Gastrocnemius medialis (tissue), 4 donors: ENCODE measurements at regions of chr11 and their contacts with region 1.

Region 1: GRCh38 chr11:31641477-31642062 is 132.0 kb downstream of the ELP4 start:
- DNase-seq: no peak
- ATAC-seq: no peak
- H3K4me3 ChIP-seq: no peak overlapping the region
- H3K27ac ChIP-seq: no peak overlapping the region
- H3K4me1 ChIP-seq: peaks cover 13 to 25% of the 10 kb centered on the region in 2 donors
- H3K27me3 ChIP-seq: no peaks in the 10 kb centered on the region
- CTCF ChIP-seq: peak in 3 of 5 experiments; percentile 21 to 54 (median 45)
- POLR2A ChIP-seq: no peak

Region 2: DNA sequence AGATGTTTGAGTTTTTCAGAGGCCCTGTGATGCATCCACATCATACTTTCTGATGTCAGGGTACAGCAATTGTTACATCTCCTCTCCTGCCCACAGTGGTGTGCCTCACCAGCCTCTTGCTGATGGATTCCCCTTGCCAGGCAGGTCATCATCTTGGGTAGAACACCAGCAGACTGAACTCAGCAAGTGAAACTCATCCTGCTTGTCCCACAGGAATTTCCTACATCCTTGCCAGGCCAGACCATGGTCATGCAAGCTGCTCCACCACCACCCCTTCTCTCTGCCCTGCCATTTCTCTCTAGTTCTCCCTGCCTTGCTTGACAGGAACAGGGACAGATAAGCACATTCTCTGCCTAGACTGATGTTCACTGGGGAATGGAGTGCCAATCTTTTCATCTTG is 83.6 kb after region 1 on chr11:
- in situ Hi-C with region 1: loop called in 1 of 4 experiments (anchors 25 kb)
- intact Hi-C with region 1: no loop called
- DNase-seq: no peak
- ATAC-seq: no peak
- H3K4me3 ChIP-seq: no peak overlapping the region
- H3K27ac ChIP-seq: no peak overlapping the region
- H3K4me1 ChIP-seq: no peaks in the 10 kb centered on the region
- H3K27me3 ChIP-seq: no peaks in the 10 kb centered on the region
- CTCF ChIP-seq: no peak
- POLR2A ChIP-seq: no peak

Region 3: DNA sequence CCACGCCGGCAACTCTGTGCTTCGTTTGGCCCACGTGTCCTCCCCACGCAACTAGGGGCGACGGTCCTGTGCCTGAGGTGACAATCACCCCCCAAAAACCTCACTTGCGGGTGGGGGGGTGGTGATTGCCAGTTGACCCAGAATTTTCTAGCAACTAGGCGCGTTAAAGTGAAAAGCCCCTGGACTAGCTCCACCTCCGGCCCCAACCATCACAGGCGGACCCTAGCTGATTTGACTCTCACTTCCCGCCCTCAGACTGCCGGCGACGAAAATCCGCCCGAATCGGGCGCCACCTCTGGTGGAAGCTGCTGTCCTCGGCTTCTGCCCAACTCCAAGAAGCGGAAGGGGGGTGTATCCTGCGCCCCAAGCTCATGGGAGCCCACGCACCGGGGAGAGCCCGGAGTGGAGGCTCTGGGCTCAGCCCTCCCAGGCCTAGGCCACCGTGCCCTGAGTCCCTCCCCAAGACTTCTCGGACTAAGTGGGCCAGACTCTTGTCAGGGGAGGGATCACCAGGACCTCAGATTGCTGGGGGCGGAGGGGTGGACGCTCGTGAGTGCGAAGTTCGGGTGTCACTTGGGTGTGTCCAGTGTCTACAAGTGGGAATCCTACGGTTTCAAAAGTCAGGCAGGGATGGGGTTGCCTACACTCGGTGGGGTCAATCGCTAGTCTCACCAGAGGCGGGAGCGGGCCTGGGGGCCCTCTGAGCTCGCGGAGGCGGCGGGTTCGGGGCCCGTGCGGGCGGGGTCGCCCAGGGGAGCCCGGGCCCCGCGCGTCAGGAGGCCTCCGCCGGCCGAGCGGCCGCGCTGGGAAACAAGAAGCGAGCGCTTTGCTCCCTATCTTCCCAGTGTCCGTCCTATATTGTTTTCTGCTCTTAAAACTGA is 157.2 kb after region 1 on chr11:
- in situ Hi-C with region 1: no loop called
- intact Hi-C with region 1: loop called (anchors 5 kb)
- DNase-seq: no peak
- ATAC-seq: no peak
- H3K4me3 ChIP-seq: peak overlapping the region; percentile 9 to 34 (median 22)
- H3K27ac ChIP-seq: no peak overlapping the region
- H3K4me1 ChIP-seq: peaks cover 9 to 25% of the 10 kb centered on the region in 2 donors
- H3K27me3 ChIP-seq: peaks cover 70 to 79% (median 73%) of the 10 kb centered on the region in 3 donors
- CTCF ChIP-seq: peak in 1 of 5 experiments; percentile 22
- POLR2A ChIP-seq: no peak

Region 4: GRCh38 chr11:31810779-31811647 is 169.4 kb after region 1 on chr11 and contains the start of gene PAX6:
- in situ Hi-C with region 1: no loop called
- intact Hi-C with region 1: loop called (anchors 5 kb)
- DNase-seq: peak in 1 of 2 donors; percentile 16
- ATAC-seq: no peak
- H3K4me3 ChIP-seq: peak within 1 kb of the TSS; percentile 42 to 68 (median 53)
- H3K27ac ChIP-seq: no peak within 1 kb of the TSS
- H3K4me1 ChIP-seq: peaks cover 56 to 65% of the 10 kb centered on the region in 2 donors
- H3K27me3 ChIP-seq: peaks cover 97 to 100% (median 100%) of the 10 kb centered on the region in 3 donors
- CTCF ChIP-seq: no peak
- POLR2A ChIP-seq: no peak
- total RNA-seq, gene PAX6: not detected

Region 5: DNA sequence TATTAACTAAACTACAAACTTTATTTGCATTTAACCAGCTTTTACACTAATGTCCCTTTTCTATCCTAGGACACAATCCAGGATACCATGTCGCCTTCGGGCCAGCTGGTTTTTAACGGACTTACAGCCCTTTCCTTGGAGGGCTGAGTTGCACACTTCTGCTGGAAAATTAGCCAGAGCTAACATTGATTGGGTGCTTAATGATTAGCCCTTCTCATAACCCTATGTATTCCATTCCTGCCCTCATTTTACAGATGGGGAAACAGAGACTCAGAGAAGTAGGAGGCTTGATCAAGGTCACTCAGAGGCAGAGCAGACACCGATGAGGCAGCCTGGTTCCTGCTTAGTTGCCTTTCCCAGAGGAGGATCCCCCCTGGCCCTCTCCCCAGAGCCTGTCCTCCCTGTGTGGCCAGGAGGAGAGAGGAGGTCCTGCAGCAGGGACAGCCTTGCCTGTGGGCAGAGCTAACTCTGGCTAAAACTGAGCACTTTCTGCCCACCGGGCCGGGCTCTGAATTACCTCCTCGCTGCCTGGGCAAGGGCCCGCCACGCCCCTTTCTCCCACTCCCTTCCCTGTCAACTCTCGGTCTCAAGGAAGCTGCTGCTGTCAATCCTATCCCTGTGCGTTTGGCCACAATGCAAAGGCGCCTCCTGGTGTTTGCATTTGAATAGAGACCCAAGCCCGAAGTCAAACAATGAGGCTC is 229.2 kb after region 1 on chr11:
- in situ Hi-C with region 1: no loop called
- intact Hi-C with region 1: loop called (anchors 5 kb)
- DNase-seq: peak; percentile 5 to 14
- ATAC-seq: no peak
- H3K4me3 ChIP-seq: no peak overlapping the region
- H3K27ac ChIP-seq: no peak overlapping the region
- H3K4me1 ChIP-seq: no peaks in the 10 kb centered on the region
- H3K27me3 ChIP-seq: peaks cover 0 to 3% (median 0%) of the 10 kb centered on the region in 3 donors
- CTCF ChIP-seq: peak; percentile 23 to 60 (median 43)
- POLR2A ChIP-seq: no peak